ENCODE measurements at regions of chr3 and their contacts with region 1.

Region 1: GRCh38 chr3:190120269-190121060 is at the start of gene P3H2:
- DNase-seq: peak; percentile 78 to 90
- ATAC-seq: peak; percentile 96 to 97
- H3K4me3 ChIP-seq: peak within 1 kb of the TSS; percentile 96
- H3K27ac ChIP-seq: peak within 1 kb of the TSS; percentile 90 to 96
- H3K4me1 ChIP-seq: peaks cover 66% of the 10 kb centered on the region
- CTCF ChIP-seq: peak; percentile 36; the same call in 2 of the 3 replicates
- EP300 ChIP-seq: no peak
- POLR2A ChIP-seq: peak; percentile 50
- RAD21 ChIP-seq: peak; percentile 51 to 67
- polyA plus RNA-seq, gene P3H2: 59.9 and 72.5 TPM in 2 replicates

Region 2: DNA sequence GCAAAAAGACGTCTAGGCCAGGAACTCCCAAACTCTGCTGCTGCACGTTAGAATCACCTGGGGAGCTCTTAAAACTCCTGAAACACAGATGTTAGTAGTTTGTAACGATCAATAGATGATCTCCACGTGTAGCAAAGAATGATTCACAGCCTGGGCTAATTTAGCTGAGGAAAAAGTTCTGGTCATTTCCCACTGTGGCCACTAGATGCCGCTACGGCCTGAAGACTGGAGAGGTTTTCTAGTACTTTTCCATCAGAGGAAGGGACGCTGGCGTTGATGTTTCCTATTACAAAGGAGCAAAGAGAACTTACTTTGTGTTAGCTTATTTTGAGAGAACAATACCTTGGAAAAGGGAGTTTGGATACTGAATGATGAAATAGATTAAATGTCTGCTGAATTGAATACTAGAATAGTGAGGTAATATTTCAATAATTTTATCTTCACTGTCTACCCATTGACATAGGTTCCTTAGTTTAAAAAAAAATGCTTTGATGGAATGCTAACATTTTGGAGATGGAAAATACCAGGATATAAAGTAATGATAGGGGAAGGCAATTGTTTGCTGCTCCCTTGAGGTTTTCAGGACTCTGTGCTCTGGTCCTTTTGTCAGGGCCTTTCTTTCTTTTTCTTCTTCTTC is 158.8 kb before region 1 on chr3:
- CTCF ChIA-PET with region 1: interaction called, 15 read pairs
- POLR2A ChIA-PET with region 1: no interaction called
- DNase-seq: peak; percentile 70 to 74
- ATAC-seq: peak; percentile 59 to 82; a peak in 4 of 6 replicates
- H3K4me3 ChIP-seq: no peak overlapping the region
- H3K27ac ChIP-seq: peak overlapping the region; percentile 59 to 63
- H3K4me1 ChIP-seq: peaks cover 14% of the 10 kb centered on the region
- CTCF ChIP-seq: peak; percentile 78
- EP300 ChIP-seq: no peak
- POLR2A ChIP-seq: no peak
- RAD21 ChIP-seq: peak; percentile 87 to 90

Region 3: GRCh38 chr3:189967254-189967865 is 153.1 kb before region 1 on chr3:
- CTCF ChIA-PET with region 1: interaction called, 15 read pairs
- POLR2A ChIA-PET with region 1: no interaction called
- DNase-seq: peak; percentile 26 to 55
- ATAC-seq: peak in 1 of 2 experiments; percentile 67; a peak in 3 of 6 replicates
- H3K4me3 ChIP-seq: no peak overlapping the region
- H3K27ac ChIP-seq: no peak overlapping the region
- H3K4me1 ChIP-seq: 0 out of 3 replicates have a peak, but pooled peaks cover 1% of the 10 kb centered on the region
- CTCF ChIP-seq: peak; percentile 75
- EP300 ChIP-seq: no peak
- POLR2A ChIP-seq: no peak
- RAD21 ChIP-seq: peak; percentile 84 to 85

Region 4: GRCh38 chr3:190053919-190054672 is 66.4 kb before region 1 on chr3:
- CTCF ChIA-PET with region 1: interaction called, 10 read pairs
- POLR2A ChIA-PET with region 1: interaction called, 5 read pairs
- DNase-seq: peak; percentile 46 to 82
- ATAC-seq: peak; percentile 96 to 99
- H3K4me3 ChIP-seq: no peak overlapping the region
- H3K27ac ChIP-seq: peak overlapping the region; percentile 53 to 78
- H3K4me1 ChIP-seq: peaks cover 55% of the 10 kb centered on the region
- CTCF ChIP-seq: no peak
- EP300 ChIP-seq: no peak
- POLR2A ChIP-seq: no peak
- RAD21 ChIP-seq: no peak